SK-N-SH (cell line): ENCODE measurements at regions of chr5 and their contacts with region 1.

Region 1: DNA sequence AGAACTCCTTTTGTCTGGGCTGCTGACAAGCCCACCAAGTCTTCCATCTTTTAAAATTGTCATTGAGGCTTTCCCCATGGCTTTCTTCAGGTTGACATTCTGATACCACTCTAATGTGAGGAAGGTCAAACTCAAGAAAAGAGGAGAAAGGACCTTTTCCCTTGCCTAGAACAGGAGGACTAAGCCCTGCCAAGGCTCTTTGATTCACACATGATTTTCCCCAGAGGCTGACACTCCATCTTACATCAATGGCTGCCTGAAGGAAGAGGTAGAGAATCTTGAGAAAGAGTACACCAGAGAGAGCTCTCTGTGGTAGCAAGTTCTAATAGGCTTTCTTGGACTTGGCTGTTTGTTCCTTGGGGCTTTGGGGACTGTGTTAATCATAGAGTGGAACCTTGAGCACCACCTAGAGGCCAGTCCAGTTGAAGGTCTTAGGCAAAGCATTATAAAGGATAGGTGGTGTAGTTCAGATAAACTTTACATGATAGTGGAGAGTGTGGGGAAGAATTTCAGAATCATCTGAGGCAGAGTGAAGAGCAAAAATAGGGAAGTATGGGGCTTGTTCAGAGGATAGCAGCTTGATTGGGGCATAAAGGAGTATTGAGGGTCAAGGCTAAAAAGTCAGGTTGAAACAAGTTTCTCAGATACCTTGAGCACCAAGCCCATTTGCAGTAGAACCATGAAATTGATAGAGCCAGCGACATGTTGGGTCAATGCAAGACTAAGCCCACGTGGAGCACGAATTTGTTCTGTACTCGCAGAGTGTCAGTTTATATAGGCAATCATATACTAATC is 36.7 kb downstream of the NDFIP1 start:
- DNase-seq: peak; percentile 57
- H3K4me3 ChIP-seq: no peak overlapping the region; a peak in 1 of 4 replicates
- H3K27ac ChIP-seq: no peak overlapping the region
- H3K4me1 ChIP-seq: peaks cover 0 to 4% of the 10 kb centered on the region in 2 experiments; a peak in 2 of 4 replicates
- H3K27me3 ChIP-seq: no peaks in the 10 kb centered on the region
- CTCF ChIP-seq: peak; percentile 86
- EP300 ChIP-seq: no peak
- RAD21 ChIP-seq: peak; percentile 71

Region 2: GRCh38 chr5:141986072-141986471 is 159.2 kb before region 1 on chr5:
- CTCF ChIA-PET with region 1: interaction called, 164 read pairs
- POLR2A ChIA-PET with region 1: no interaction called
- DNase-seq: no peak
- H3K4me3 ChIP-seq: no peak overlapping the region
- H3K27ac ChIP-seq: no peak overlapping the region
- H3K4me1 ChIP-seq: no peaks in the 10 kb centered on the region
- H3K27me3 ChIP-seq: no peaks in the 10 kb centered on the region
- CTCF ChIP-seq: no peak
- EP300 ChIP-seq: no peak
- RAD21 ChIP-seq: no peak

Region 3: DNA sequence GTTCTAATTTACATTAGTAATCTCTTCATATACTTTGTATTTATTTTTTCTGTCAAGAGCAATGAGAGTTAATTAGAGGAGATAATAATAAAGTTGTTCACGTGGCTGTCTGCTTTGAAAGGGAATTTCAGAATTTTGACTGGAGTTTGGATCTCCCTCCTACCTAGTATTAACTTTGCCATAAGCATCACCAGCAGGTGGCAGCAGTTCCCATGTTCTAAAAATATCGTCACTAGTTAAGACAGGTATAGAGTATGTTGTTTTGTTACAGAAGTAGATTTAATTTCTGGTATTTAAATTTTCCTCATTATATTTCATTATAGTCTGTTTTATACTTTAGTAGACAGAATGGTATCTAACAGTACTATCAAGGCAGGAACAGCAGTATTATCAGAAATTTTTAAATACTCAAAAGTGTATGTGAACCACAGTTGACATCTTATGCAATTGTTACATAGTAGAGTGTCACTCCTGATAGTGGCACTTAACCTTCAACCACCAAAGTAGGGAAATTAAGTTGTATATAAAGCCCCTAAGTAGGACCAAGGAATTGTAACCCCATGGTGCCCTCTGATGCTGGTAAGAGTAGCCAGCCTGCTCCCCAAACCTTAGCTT is 152.8 kb before region 1 on chr5:
- CTCF ChIA-PET with region 1: interaction called, 164 read pairs
- POLR2A ChIA-PET with region 1: no interaction called
- DNase-seq: peak; percentile 65
- H3K4me3 ChIP-seq: no peak overlapping the region; a peak in 1 of 4 replicates
- H3K27ac ChIP-seq: no peak overlapping the region
- H3K4me1 ChIP-seq: no peaks in the 10 kb centered on the region
- H3K27me3 ChIP-seq: no peaks in the 10 kb centered on the region
- CTCF ChIP-seq: peak; percentile 90
- EP300 ChIP-seq: no peak
- RAD21 ChIP-seq: peak; percentile 75

Region 4: DNA sequence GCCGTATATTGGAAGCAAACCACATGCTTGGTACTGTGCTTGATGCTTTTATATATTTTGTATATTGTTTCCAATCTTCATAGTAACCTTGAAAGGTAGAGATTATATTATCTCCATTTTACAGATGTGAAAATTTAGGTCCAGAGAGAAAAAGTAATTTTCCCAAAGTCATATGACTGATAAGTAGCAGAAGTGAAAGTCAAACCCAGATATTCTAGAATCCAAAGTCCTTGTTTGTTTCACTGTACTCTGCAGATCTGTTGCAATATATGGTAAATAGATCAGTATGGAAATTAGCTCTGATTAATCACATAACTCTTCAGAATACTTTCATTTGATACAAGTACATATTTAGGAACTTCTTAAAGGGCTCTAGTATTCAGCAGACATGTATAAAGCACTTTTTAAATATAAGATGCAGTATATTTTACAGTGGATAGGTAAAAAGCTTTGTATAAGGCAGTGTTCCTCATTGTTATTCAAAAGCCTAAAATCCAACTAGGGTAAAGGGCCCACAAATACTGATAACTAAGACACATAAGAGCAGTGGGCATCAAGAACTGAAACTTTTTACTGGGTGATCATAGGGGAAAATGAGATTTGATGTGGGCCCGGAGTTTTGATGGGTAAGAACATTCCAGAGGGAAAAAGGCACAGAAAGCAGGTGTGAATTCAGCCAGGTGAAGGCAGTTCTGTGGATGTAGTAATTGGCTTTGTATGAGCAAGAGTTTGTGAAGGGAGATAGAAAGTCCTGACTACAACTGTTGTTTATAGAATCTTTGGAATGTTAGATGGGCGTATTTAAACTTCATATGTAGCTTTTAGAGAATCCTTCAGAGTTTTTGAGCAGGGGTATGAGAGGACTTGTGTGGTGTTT is 11.7 kb before region 1 on chr5:
- CTCF ChIA-PET with region 1: interaction called, 14 read pairs
- POLR2A ChIA-PET with region 1: no interaction called
- DNase-seq: no peak
- H3K4me3 ChIP-seq: no peak overlapping the region
- H3K27ac ChIP-seq: no peak overlapping the region
- H3K4me1 ChIP-seq: peaks cover 0 to 6% of the 10 kb centered on the region in 2 experiments; a peak in 1 of 4 replicates
- H3K27me3 ChIP-seq: no peaks in the 10 kb centered on the region
- CTCF ChIP-seq: no peak
- EP300 ChIP-seq: no peak
- RAD21 ChIP-seq: no peak

Region 5: DNA sequence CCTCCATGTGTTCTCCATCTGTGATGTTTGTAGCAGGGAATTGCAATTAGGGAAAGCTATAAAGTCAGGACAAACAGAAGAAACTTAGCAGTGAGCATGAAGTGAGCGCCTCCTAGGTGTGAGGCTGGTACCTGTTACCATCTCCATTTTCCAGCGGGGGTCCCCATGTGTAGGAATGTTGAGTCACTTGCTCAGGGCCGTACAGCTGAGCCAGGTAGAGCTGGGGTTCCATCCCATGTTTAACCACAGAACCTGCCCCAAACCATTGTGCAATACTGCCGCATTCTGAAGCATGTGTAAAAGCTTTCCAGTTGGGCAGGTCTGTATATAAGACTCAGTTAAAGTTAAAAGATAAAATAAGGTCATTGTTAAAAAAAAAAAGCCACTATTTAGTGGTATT is 26.0 kb after region 1 on chr5:
- CTCF ChIA-PET with region 1: no interaction called
- POLR2A ChIA-PET with region 1: no interaction called
- DNase-seq: no peak
- H3K4me3 ChIP-seq: no peak overlapping the region
- H3K27ac ChIP-seq: peak overlapping the region in 1 of 2 experiments; percentile 99; a peak in 2 of 4 replicates
- H3K4me1 ChIP-seq: peaks cover 5 to 53% of the 10 kb centered on the region in 2 experiments
- H3K27me3 ChIP-seq: no peaks in the 10 kb centered on the region
- CTCF ChIP-seq: 0 out of 2 replicates have a peak, but pooled peaks have one; percentile 17
- EP300 ChIP-seq: no peak
- RAD21 ChIP-seq: no peak